Posterior vena cava (tissue), 2 donors: ENCODE measurements at regions of chr2 and their contacts with region 1.

Region 1: DNA sequence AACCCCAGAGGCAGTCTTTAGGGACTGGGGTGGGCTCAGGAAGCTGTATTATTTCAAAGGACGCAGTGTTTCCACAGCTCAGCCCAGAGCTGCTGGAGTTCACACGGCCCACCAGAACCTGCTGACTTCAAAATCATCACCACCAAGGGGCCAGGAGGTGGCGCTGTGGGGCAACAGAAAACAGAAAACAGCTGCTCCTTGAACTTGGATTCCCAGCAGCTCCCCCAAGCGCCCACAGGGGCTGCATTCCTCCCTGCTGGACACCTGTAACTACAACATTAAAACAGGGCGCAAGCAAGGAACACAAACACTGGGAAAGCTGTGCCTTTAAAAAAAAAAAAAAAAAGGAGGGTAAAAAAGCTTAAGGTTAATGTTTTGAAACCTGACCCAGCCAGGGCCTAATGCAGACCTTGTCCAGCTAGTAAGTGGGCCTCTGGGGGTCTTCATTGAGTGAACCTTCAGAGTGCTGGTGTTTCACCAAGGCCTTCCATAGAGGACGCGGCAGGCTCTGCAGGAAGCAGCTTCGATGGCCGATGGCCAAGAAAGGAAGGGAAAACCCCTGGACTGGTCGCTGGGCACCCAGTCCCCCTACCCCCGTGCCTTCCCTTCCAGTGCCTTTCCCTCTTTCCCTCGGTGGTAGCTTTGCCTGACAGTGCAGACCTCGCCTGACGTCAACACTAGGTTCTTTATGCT is 25.9 kb downstream of the MLPH start:
- DNase-seq: peak; percentile 95

Region 2: DNA sequence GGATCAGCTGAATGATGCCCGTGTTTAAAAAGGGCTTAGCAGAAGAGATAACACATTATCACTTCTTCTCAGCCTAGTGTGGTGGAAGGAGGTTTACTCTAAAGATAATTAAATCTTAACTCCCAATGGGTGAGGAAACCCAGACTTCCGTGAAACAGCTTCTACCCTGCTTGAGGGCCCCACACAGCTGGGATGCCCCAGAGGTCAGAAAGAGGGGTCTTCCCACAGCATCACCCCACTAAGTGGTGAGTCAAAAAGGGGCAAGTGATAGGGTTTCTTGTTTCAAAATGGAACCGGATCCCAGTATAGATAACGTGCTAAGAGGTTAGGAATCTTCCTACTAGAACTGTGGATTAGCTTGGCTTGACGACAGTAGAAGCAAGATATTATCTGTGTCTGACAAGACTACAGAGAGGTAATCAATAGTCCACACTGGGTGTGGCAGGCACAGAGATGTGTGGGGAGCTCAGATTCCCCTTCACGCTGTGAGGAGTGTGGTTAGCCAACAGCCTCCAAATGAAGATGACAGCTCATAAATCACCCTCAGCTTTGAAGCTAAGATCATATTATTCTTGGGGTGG is 556.8 kb before region 1 on chr2:
- intact Hi-C with region 1: no loop called
- DNase-seq: no peak

Region 3: GRCh38 chr2:237572021-237572741 is 59.3 kb after region 1 on chr2:
- intact Hi-C with region 1: loop called (anchors 2 to 5 kb)
- DNase-seq: peak; percentile 97

Region 4: GRCh38 chr2:237744613-237745249 is 231.8 kb after region 1 on chr2:
- intact Hi-C with region 1: loop called in 1 of 2 experiments (anchors 10 kb)
- DNase-seq: peak; percentile 95

Region 5: DNA sequence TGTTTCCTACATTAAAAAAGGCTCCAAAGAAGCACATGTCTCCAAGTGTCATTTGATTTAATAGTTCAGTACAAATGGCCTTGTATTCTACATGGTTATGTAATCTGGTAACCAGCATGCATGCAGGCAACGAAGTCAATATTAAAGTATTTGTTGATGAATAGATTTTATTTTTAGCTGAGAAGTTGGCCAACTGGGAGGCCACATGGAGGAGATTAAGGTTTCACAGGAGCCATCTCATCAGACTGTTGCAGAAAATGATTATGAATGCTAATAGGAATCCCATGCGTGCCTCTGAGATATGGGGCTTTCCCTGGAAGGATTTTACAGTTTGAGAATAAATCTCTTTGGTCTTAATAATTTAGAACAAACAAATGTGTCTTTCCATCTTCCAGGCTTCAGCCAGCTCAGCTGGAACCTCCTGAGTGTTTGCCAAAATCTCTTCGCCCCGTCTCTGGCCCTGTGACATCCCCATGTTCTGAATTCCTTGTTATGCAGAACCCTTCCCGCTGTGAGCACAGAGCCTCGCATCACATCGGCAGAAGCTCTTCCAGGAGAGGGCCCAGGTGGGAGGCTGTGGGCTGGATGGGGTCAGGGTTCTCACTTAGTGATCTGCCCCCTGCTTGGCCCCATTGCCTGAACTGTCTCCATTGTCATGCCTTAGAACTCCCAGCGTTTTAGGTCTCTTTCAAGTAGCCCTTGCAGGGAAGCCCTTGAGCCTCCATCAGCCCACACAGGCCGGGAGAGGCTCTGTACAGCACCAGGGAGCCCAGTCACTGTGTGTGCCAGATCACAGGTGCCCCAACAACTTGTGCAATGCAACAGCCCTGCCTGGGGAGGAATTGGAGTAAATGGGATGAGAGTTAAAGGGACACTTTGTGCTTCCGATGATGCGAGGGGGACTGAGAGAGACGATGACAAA is 1144.5 kb after region 1 on chr2:
- intact Hi-C with region 1: loop called in 1 of 2 experiments (anchors 5 kb)
- DNase-seq: no peak